ENCODE measurements at regions of chr9 and their contacts with region 1.

Region 1: DNA sequence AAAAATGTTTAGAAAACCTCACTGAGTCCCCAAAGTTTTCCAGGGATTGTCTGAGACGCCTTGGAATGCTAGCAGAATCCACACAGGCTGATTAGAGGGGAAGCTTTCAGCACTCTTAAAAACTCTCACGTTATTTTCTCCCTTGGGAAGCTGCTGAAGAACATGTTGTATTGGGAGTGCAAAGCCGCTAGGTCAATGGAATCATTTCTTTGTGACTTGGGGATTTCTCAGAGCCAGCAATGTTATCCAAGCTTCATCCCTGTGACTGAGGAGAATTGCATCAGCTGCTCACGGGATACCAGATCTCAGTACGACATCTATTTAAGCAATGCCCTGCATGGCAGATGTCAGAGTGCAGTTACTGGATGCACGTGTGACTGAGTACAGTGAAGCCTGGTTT is 426.4 kb upstream of the MPDZ start:
- DNase-seq: peak; percentile 81
- H3K4me3 ChIP-seq: no peak overlapping the region
- H3K27ac ChIP-seq: peak overlapping the region; percentile 80
- H3K4me1 ChIP-seq: peaks cover 39% of the 10 kb centered on the region
- H3K27me3 ChIP-seq: no peaks in the 10 kb centered on the region
- CTCF ChIP-seq: no peak
- POLR2A ChIP-seq: no peak

Region 2: GRCh38 chr9:13575558-13575957 is 130.4 kb before region 1 on chr9:
- CTCF ChIA-PET with region 1: no interaction called
- POLR2A ChIA-PET with region 1: no interaction called
- dilution Hi-C with region 1: no loop called
- intact Hi-C with region 1: loop called (anchors 5 kb)
- DNase-seq: peak; percentile 95
- H3K4me3 ChIP-seq: no peak overlapping the region
- H3K27ac ChIP-seq: peak overlapping the region; percentile 89
- H3K4me1 ChIP-seq: peaks cover 23% of the 10 kb centered on the region
- H3K27me3 ChIP-seq: no peaks in the 10 kb centered on the region
- CTCF ChIP-seq: no peak
- POLR2A ChIP-seq: no peak

Region 3: DNA sequence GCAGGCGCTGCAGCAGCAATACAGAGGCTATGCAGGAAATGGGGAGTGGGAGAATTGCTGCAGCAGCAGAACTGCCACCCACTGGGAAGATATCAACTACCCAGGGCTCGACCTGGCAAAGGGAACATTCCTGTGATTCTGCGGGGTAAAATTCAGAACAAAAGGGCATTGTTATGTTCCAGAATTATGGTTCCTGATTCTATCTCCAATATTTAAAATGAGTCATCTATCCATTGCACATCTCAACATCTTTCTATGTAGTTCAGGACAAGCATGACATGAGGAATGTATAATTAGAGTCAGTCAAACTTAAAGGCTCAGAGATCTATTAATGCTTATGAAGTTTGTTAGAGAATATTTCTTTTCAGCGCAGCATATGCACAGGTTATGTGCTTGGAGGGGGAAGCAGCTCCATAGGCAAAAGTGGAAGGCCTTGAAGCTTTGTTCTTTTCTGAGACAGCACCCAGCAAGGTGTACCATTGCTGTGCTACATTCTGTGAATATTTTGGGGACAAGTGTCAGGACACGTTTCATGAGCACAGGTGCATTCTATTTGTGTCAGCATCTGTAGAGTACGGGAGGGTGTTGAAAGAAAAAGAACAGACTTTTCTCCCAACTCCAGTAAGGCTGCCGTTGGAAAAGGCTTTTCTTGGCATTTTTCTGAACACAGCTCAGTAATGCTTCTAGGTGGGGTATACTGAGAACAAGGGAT is 30.8 kb before region 1 on chr9:
- CTCF ChIA-PET with region 1: no interaction called
- POLR2A ChIA-PET with region 1: no interaction called
- dilution Hi-C with region 1: no loop called
- intact Hi-C with region 1: no loop called
- DNase-seq: no peak
- H3K4me3 ChIP-seq: no peak overlapping the region
- H3K27ac ChIP-seq: no peak overlapping the region
- H3K4me1 ChIP-seq: no peaks in the 10 kb centered on the region
- H3K27me3 ChIP-seq: no peaks in the 10 kb centered on the region
- CTCF ChIP-seq: no peak
- POLR2A ChIP-seq: no peak

Region 4: GRCh38 chr9:13750061-13750460 is 44.1 kb after region 1 on chr9:
- CTCF ChIA-PET with region 1: no interaction called
- POLR2A ChIA-PET with region 1: no interaction called
- dilution Hi-C with region 1: no loop called
- intact Hi-C with region 1: loop called (anchors 1 kb)
- DNase-seq: peak; percentile 96
- H3K4me3 ChIP-seq: no peak overlapping the region
- H3K27ac ChIP-seq: peak overlapping the region; percentile 72
- H3K4me1 ChIP-seq: peaks cover 17% of the 10 kb centered on the region
- H3K27me3 ChIP-seq: no peaks in the 10 kb centered on the region
- CTCF ChIP-seq: no peak
- POLR2A ChIP-seq: peak; percentile 49

Region 5: GRCh38 chr9:13898957-13899356 is 193.0 kb after region 1 on chr9:
- CTCF ChIA-PET with region 1: no interaction called
- POLR2A ChIA-PET with region 1: no interaction called
- dilution Hi-C with region 1: no loop called
- intact Hi-C with region 1: loop called (anchors 5 kb)
- DNase-seq: peak; percentile 83
- H3K4me3 ChIP-seq: no peak overlapping the region
- H3K27ac ChIP-seq: no peak overlapping the region
- H3K4me1 ChIP-seq: peaks cover 31% of the 10 kb centered on the region
- H3K27me3 ChIP-seq: no peaks in the 10 kb centered on the region
- CTCF ChIP-seq: no peak
- POLR2A ChIP-seq: no peak

Region 6: GRCh38 chr9:14180093-14180959 is 474.4 kb after region 1 on chr9:
- CTCF ChIA-PET with region 1: no interaction called
- POLR2A ChIA-PET with region 1: no interaction called
- dilution Hi-C with region 1: no loop called
- intact Hi-C with region 1: no loop called
- DNase-seq: no peak
- H3K4me3 ChIP-seq: no peak overlapping the region
- H3K27ac ChIP-seq: no peak overlapping the region
- H3K4me1 ChIP-seq: peaks cover 20% of the 10 kb centered on the region
- H3K27me3 ChIP-seq: no peaks in the 10 kb centered on the region
- CTCF ChIP-seq: no peak
- POLR2A ChIP-seq: no peak

Measured in endothelial cell of umbilical vein (primary cell).